B cell (primary cell): ENCODE measurements at regions of chr7 and their contacts with region 1.

Region 1: GRCh38 chr7:122092964-122093797 is 50.9 kb downstream of the AASS start:
- DNase-seq: peak; percentile 77
- ATAC-seq: peak; percentile 80
- H3K4me3 ChIP-seq: no peak overlapping the region
- H3K4me3 Mint-ChIP-seq: no peak overlapping the region
- H3K27ac ChIP-seq: peak overlapping the region; percentile 11 to 21
- H3K27ac Mint-ChIP-seq: peak overlapping the region; percentile 32
- H3K4me1 ChIP-seq: peaks cover 0 to 4% of the 10 kb centered on the region in 2 donors
- H3K4me1 Mint-ChIP-seq: peaks cover 4% of the 10 kb centered on the region
- H3K27me3 ChIP-seq: no peaks in the 10 kb centered on the region
- H3K27me3 Mint-ChIP-seq: no peaks in the 10 kb centered on the region
- CTCF ChIP-seq: peak; percentile 94

Region 2: DNA sequence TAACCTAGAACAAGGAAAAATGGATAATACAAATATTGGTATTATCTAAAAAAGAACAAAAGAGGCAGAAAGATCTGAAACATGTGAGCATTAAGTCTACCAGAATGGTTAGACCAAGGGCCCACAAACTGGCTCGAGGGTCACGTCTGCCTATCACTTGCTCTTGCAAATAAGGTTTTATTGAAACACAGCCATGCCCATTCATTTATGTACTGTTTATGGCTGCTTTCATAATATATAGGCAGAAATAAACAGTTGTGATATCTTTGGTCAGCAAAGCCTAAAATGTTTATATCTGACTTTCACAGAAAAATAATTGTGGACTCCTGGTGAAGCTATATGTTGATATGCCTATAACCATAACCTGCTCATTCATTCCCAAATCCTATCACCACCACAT is 20.9 kb before region 1 on chr7:
- CTCF ChIA-PET with region 1: no interaction called
- POLR2A ChIA-PET with region 1: no interaction called
- intact Hi-C with region 1: no loop called
- DNase-seq: no peak
- ATAC-seq: no peak
- H3K4me3 ChIP-seq: no peak overlapping the region
- H3K4me3 Mint-ChIP-seq: no peak overlapping the region
- H3K27ac ChIP-seq: no peak overlapping the region
- H3K27ac Mint-ChIP-seq: no peak overlapping the region
- H3K4me1 ChIP-seq: no peaks in the 10 kb centered on the region
- H3K4me1 Mint-ChIP-seq: no peaks in the 10 kb centered on the region
- H3K27me3 ChIP-seq: no peaks in the 10 kb centered on the region
- H3K27me3 Mint-ChIP-seq: no peaks in the 10 kb centered on the region
- CTCF ChIP-seq: no peak

Region 3: DNA sequence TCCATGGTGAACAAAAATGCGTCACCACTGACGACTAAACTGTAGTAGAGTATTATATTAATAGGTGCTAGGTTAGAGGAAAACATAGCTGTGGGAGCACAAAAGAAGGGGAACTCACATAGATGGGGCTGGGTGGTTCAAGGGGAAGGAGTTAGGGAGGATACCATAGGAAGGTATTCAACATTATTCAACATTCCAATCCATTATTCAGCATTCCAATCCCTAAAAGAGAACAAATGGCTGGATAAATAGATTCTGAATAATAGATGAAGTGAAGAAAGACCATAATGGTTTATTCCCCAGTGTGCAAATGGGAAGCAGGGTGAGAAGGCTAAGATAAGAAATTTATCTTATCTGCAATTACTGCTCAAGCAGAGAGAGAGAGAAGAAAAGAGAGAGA is 10.5 kb before region 1 on chr7:
- CTCF ChIA-PET with region 1: interaction called, 10 read pairs
- POLR2A ChIA-PET with region 1: no interaction called
- intact Hi-C with region 1: no loop called
- DNase-seq: no peak
- ATAC-seq: no peak
- H3K4me3 ChIP-seq: no peak overlapping the region
- H3K4me3 Mint-ChIP-seq: no peak overlapping the region
- H3K27ac ChIP-seq: no peak overlapping the region
- H3K27ac Mint-ChIP-seq: no peak overlapping the region
- H3K4me1 ChIP-seq: no peaks in the 10 kb centered on the region
- H3K4me1 Mint-ChIP-seq: no peaks in the 10 kb centered on the region
- H3K27me3 ChIP-seq: no peaks in the 10 kb centered on the region
- H3K27me3 Mint-ChIP-seq: no peaks in the 10 kb centered on the region
- CTCF ChIP-seq: no peak

Region 4: DNA sequence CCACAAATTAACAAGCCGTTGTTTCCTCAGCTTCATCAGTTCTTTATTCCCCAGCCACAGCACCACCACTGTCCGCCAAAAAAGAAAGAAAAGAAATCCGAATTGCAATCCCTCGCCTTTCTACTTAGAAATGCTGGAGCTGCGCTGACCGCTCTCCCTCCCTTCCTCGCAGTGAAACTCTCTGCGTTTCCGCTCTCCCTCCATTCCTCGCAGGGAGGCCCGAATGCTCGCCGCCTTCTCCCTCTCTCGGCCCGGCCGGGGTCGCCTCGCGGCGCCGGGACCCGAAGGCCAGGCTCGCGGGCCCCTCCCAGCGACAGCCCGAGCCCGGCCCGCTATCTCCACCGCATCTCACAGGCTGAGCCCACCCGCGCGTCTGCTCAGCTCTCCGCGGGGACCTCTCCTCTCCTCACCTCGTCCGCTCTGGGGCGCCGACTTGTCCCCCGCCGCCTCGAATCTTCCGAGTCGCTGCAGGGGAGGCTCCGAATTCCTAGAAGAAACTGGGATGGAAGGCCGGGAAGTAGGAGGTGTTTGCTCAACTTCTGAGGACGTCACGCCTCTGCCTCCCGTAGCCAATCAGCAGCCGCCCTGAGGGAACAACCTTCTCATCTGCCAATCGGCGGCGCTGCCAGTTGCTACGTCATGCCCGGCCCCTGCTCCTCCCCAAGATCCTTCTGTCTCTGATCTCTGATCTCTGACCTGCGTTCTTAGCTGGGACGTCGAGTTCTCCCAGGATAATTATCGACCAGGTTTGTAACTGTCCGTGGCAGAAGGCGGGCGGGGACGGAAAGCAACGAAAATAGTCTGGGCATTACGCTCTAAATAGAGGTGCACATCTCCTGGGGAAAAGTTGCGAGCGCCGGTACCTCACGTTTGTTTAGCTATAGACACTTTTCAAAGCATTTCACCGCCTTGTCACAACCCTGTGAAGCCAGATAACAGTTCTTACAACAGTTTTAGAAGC is 50.9 kb after region 1 on chr7 and contains the start of gene AASS:
- CTCF ChIA-PET with region 1: interaction called, 4 read pairs
- POLR2A ChIA-PET with region 1: no interaction called
- intact Hi-C with region 1: loop called (anchors 5 kb)
- DNase-seq: peak; percentile 90
- ATAC-seq: peak; percentile 95
- H3K4me3 ChIP-seq: peak within 1 kb of the TSS; percentile 78 to 98 (median 84)
- H3K4me3 Mint-ChIP-seq: peak within 1 kb of the TSS; percentile 97
- H3K27ac ChIP-seq: peak within 1 kb of the TSS; percentile 54 to 63
- H3K27ac Mint-ChIP-seq: peak within 1 kb of the TSS; percentile 82
- H3K4me1 ChIP-seq: peaks cover 9 to 13% of the 10 kb centered on the region in 2 donors
- H3K4me1 Mint-ChIP-seq: peaks cover 22% of the 10 kb centered on the region
- H3K27me3 ChIP-seq: no peaks in the 10 kb centered on the region
- H3K27me3 Mint-ChIP-seq: peaks cover 16% of the 10 kb centered on the region
- CTCF ChIP-seq: no peak
- total RNA-seq, gene AASS: 10.6 and 10.8 TPM in 2 replicates

Region 5: GRCh38 chr7:122528879-122529481 is 435.8 kb after region 1 on chr7:
- CTCF ChIA-PET with region 1: interaction called, 18 read pairs
- POLR2A ChIA-PET with region 1: no interaction called
- intact Hi-C with region 1: no loop called
- DNase-seq: peak; percentile 13
- ATAC-seq: no peak
- H3K4me3 ChIP-seq: no peak overlapping the region
- H3K4me3 Mint-ChIP-seq: no peak overlapping the region
- H3K27ac ChIP-seq: no peak overlapping the region
- H3K27ac Mint-ChIP-seq: no peak overlapping the region
- H3K4me1 ChIP-seq: no peaks in the 10 kb centered on the region
- H3K4me1 Mint-ChIP-seq: no peaks in the 10 kb centered on the region
- H3K27me3 ChIP-seq: no peaks in the 10 kb centered on the region
- H3K27me3 Mint-ChIP-seq: no peaks in the 10 kb centered on the region
- CTCF ChIP-seq: peak; percentile 78